SK-N-SH (cell line): ENCODE measurements at regions of chr7 and their contacts with region 1.

Region 1: GRCh38 chr7:44847508-44847920 is 373 bp downstream of the H2AZ2 start:
- DNase-seq: peak; percentile 94
- H3K4me3 ChIP-seq: peak overlapping the region; percentile 66 to 82
- H3K27ac ChIP-seq: peak overlapping the region; percentile 85 to 91
- H3K4me1 ChIP-seq: peaks cover 5 to 21% of the 10 kb centered on the region in 2 experiments; a peak in 3 of 4 replicates
- H3K27me3 ChIP-seq: no peaks in the 10 kb centered on the region
- CTCF ChIP-seq: peak; percentile 96
- EP300 ChIP-seq: no peak
- RAD21 ChIP-seq: peak; percentile 79

Region 2: DNA sequence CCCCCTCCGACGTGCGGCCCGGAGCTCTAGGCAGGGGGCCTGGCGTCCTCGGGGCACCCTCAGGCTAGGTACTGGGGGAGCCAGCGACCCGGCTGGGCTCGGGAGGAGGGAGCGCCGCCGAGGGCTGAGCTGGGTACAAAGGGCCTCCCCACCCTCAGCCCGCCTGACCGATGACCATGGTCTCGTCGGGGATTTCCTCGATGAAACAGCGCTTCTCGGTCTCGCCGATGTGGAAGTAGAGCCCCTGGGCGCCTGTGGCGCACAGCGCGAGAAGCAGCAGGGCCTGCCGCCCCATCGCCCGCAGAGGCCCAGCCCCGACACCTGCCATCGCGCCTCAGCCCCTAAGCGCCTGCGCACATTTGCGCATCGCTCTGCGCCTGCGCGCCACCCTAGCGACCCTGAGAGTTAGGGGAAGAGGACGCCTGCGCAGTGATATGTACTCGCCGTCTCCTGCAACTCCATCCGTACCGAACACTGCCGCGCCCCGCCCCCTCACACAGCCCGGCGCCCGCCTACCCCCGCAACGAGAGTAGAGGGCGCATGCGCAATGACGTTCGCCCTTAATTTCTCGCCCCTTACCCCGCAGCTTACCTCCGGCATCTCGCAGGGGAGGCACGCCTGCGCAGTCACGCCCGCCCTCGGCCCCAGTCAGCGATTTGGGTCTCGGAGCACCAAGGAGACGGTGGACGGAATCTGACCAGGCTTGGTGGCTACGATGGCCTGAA is 265.5 kb before region 1 on chr7 and contains the start of gene TMED4:
- CTCF ChIA-PET with region 1: interaction called, 19 read pairs
- POLR2A ChIA-PET with region 1: interaction called, 11 read pairs
- DNase-seq: peak; percentile 100
- H3K4me3 ChIP-seq: peak within 1 kb of the TSS; percentile 82 to 95
- H3K27ac ChIP-seq: peak within 1 kb of the TSS; percentile 90 to 94
- H3K4me1 ChIP-seq: peaks cover 5 to 15% of the 10 kb centered on the region in 2 experiments; a peak in 2 of 4 replicates
- H3K27me3 ChIP-seq: no peaks in the 10 kb centered on the region
- CTCF ChIP-seq: no peak
- EP300 ChIP-seq: no peak
- RAD21 ChIP-seq: no peak
- polyA plus RNA-seq, gene TMED4: 145 and 192 TPM in 2 replicates

Region 3: GRCh38 chr7:44606450-44607254 is 240.9 kb before region 1 on chr7 and contains the start of gene OGDH:
- CTCF ChIA-PET with region 1: interaction called, 6 read pairs
- POLR2A ChIA-PET with region 1: interaction called, 12 read pairs
- DNase-seq: peak; percentile 100
- H3K4me3 ChIP-seq: peak within 1 kb of the TSS; percentile 62 to 87
- H3K27ac ChIP-seq: peak within 1 kb of the TSS; percentile 76 to 89
- H3K4me1 ChIP-seq: peaks cover 0 to 5% of the 10 kb centered on the region in 2 experiments; a peak in 2 of 4 replicates
- H3K27me3 ChIP-seq: no peaks in the 10 kb centered on the region
- CTCF ChIP-seq: no peak
- EP300 ChIP-seq: 0 out of 4 replicates have a peak, but pooled peaks of 1 of the 2 experiments have one; percentile 8
- RAD21 ChIP-seq: no peak
- polyA plus RNA-seq, gene OGDH: 58.2 and 69.4 TPM in 2 replicates

Region 4: DNA sequence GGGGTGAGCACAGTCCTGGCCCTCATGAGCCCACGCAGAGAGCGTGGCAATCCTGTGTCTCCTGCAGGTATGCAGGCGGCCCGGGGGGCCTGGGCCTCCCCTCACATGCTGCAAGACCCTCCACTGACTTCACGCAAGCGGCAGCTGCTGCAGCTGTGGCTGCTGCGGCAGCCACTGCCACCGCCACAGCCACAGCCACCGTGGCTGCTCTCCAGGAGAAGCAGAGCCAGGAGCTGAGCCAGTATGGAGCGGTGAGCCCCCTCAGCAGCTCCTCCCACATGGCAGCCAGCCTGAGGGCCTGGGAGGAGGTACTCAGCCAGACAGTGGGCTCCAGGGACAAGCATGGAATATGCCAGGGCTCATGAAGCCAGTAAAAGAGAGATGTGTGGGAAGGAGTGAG is 90.2 kb before region 1 on chr7:
- CTCF ChIA-PET with region 1: no interaction called
- POLR2A ChIA-PET with region 1: no interaction called
- DNase-seq: peak; percentile 45
- H3K4me3 ChIP-seq: no peak overlapping the region
- H3K27ac ChIP-seq: no peak overlapping the region
- H3K4me1 ChIP-seq: peaks cover 0 to 29% of the 10 kb centered on the region in 2 experiments; a peak in 1 of 4 replicates
- H3K27me3 ChIP-seq: no peaks in the 10 kb centered on the region
- CTCF ChIP-seq: no peak
- EP300 ChIP-seq: no peak
- RAD21 ChIP-seq: no peak

Region 5: GRCh38 chr7:44797329-44798251 is 49.9 kb before region 1 on chr7:
- CTCF ChIA-PET with region 1: interaction called, 12 read pairs
- POLR2A ChIA-PET with region 1: interaction called, 14 read pairs
- DNase-seq: peak; percentile 86
- H3K4me3 ChIP-seq: peak overlapping the region; percentile 75 to 97
- H3K27ac ChIP-seq: peak overlapping the region; percentile 91 to 97
- H3K4me1 ChIP-seq: peaks cover 5 to 7% of the 10 kb centered on the region in 2 experiments; a peak in 3 of 4 replicates
- H3K27me3 ChIP-seq: no peaks in the 10 kb centered on the region
- CTCF ChIP-seq: peak; percentile 59
- EP300 ChIP-seq: peak; percentile 7 to 9; a peak in 2 of 4 replicates
- RAD21 ChIP-seq: peak; percentile 49

Region 6: GRCh38 chr7:44876393-44876792 is 28.9 kb after region 1 on chr7:
- CTCF ChIA-PET with region 1: interaction called, 10 read pairs
- POLR2A ChIA-PET with region 1: no interaction called
- DNase-seq: no peak
- H3K4me3 ChIP-seq: no peak overlapping the region
- H3K27ac ChIP-seq: no peak overlapping the region
- H3K4me1 ChIP-seq: peaks cover 0 to 15% of the 10 kb centered on the region in 2 experiments; a peak in 2 of 4 replicates
- H3K27me3 ChIP-seq: no peaks in the 10 kb centered on the region
- CTCF ChIP-seq: no peak
- EP300 ChIP-seq: no peak
- RAD21 ChIP-seq: no peak

Region 7: GRCh38 chr7:44894888-44895580 is 47.5 kb after region 1 on chr7:
- CTCF ChIA-PET with region 1: no interaction called
- POLR2A ChIA-PET with region 1: no interaction called
- DNase-seq: no peak
- H3K4me3 ChIP-seq: no peak overlapping the region
- H3K27ac ChIP-seq: no peak overlapping the region
- H3K4me1 ChIP-seq: no peaks in the 10 kb centered on the region; a peak in 1 of 4 replicates
- H3K27me3 ChIP-seq: no peaks in the 10 kb centered on the region
- CTCF ChIP-seq: no peak
- EP300 ChIP-seq: no peak
- RAD21 ChIP-seq: no peak